Activated CD4-positive, alpha-beta memory T cell treated with anti-CD3 and anti-CD28 coated beads for 36 hours (primary cell): ENCODE measurements at regions of chr6 and their contacts with region 1.

Region 1: GRCh38 chr6:32933636-32934085 is 7.2 kb downstream of the HLA-DMB start:
- DNase-seq: peak; percentile 84
- H3K4me3 Mint-ChIP-seq: no peak overlapping the region
- H3K27ac Mint-ChIP-seq: no peak overlapping the region
- H3K4me1 Mint-ChIP-seq: no peaks in the 10 kb centered on the region
- H3K27me3 Mint-ChIP-seq: no peaks in the 10 kb centered on the region

Region 2: DNA sequence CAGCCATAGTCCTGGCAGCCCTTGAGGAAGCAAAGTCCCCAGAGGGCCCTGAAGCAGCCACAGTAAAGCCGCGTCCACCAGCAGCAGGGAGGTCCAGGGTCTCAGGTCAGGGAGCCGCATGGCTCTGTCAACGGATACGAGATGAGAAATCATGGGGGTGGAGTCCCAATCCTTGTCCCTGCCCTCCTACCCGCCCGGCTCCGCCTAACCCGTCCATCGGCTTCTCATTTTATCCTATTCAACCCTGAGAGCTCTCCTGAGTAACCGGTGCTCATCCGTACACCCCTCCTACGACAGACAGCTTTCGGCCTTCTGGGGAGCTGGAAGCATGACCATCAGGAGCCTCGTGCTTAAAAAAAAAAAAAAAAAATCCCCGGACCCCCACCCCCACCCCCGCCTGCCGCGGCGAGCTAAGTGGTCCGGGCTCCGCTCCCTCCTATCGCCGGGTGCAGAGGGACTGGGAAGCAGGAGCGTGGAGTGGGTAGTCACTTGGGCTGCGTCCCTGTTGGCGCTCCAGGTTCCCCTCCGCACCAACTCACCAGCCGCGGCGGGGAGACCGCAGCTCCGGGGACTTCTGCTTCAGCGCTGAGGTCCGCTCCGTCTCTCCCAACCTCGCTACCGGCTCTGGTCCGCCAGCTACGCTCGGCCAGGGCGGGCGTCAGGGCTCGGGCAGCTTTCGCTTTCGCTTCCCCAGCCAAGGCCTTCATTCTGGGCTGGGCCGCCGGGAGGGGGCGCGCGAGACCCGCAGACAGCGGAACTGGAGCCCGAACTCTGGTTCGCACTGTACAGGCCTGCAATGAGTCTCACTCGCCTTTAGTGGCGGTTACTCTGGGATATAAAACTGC is 95.3 kb before region 1 on chr6 and contains the start of gene TAP2:
- CTCF ChIA-PET with region 1: interaction called, 13 read pairs
- POLR2A ChIA-PET with region 1: no interaction called
- intact Hi-C with region 1: no loop called
- DNase-seq: peak; percentile 98
- H3K4me3 Mint-ChIP-seq: peak within 1 kb of the TSS; percentile 73
- H3K27ac Mint-ChIP-seq: peak within 1 kb of the TSS; percentile 91
- H3K4me1 Mint-ChIP-seq: peaks cover 76% of the 10 kb centered on the region
- H3K27me3 Mint-ChIP-seq: no peaks in the 10 kb centered on the region
- total RNA-seq, gene TAP2: 134 to 143 TPM

Region 3: GRCh38 chr6:32885698-32886286 is 47.9 kb before region 1 on chr6:
- CTCF ChIA-PET with region 1: interaction called, 20 read pairs
- POLR2A ChIA-PET with region 1: no interaction called
- intact Hi-C with region 1: no loop called
- DNase-seq: no peak
- H3K4me3 Mint-ChIP-seq: no peak overlapping the region
- H3K27ac Mint-ChIP-seq: no peak overlapping the region
- H3K4me1 Mint-ChIP-seq: peaks cover 11% of the 10 kb centered on the region
- H3K27me3 Mint-ChIP-seq: no peaks in the 10 kb centered on the region

Region 4: DNA sequence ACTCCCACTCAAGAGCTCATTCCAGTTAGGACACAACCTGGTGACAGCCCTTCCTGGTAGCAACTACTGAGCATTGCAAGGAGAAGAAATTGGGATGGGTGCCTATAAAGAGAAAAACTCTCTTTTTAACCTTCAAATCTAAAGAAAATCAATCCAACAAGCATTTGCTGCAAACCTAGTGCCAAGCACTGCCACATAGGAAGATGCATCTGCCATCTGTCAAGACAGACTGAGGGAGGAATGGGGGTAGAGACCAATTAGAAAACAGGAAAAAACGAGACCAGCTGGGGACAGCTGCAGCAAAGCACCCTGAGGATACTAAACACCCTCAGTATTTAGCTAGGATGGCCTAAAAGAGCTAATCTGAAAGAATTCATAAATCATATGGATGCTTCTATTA is 20.7 kb before region 1 on chr6:
- CTCF ChIA-PET with region 1: interaction called, 28 read pairs
- POLR2A ChIA-PET with region 1: no interaction called
- intact Hi-C with region 1: no loop called
- DNase-seq: no peak
- H3K4me3 Mint-ChIP-seq: no peak overlapping the region
- H3K27ac Mint-ChIP-seq: no peak overlapping the region
- H3K4me1 Mint-ChIP-seq: peaks cover 4% of the 10 kb centered on the region
- H3K27me3 Mint-ChIP-seq: peaks cover 15% of the 10 kb centered on the region

Region 5: GRCh38 chr6:32947552-32948465 is 14.1 kb after region 1 on chr6:
- CTCF ChIA-PET with region 1: interaction called, 216 read pairs
- POLR2A ChIA-PET with region 1: no interaction called
- intact Hi-C with region 1: loop called (anchors 1 kb)
- DNase-seq: peak; percentile 63
- H3K4me3 Mint-ChIP-seq: no peak overlapping the region
- H3K27ac Mint-ChIP-seq: no peak overlapping the region
- H3K4me1 Mint-ChIP-seq: peaks cover 50% of the 10 kb centered on the region
- H3K27me3 Mint-ChIP-seq: no peaks in the 10 kb centered on the region

Region 6: DNA sequence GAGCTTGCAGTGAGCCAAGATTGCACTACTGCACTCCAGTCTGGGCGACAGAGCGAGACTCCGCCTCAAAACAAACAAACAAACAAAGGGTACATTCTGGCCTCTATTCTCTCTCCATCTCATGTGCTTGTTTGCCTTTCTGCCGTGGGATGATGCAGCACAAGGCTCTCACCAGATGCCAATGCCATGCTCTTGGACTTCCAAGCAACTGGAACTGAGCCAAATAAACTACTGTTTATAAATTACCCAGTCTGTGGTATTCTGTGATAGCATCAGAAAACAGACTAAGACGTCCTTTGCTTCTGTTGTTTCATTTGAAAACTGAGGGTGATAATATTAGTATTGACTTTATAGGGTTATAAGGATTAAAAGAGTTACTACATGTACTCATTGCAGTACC is 31.1 kb after region 1 on chr6:
- CTCF ChIA-PET with region 1: interaction called, 216 read pairs
- POLR2A ChIA-PET with region 1: interaction called, 6 read pairs
- intact Hi-C with region 1: loop called (anchors 5 kb)
- DNase-seq: no peak
- H3K4me3 Mint-ChIP-seq: no peak overlapping the region
- H3K27ac Mint-ChIP-seq: no peak overlapping the region
- H3K4me1 Mint-ChIP-seq: peaks cover 51% of the 10 kb centered on the region
- H3K27me3 Mint-ChIP-seq: no peaks in the 10 kb centered on the region